ENCODE measurements at regions of chr4 and their contacts with region 1.

Region 1: DNA sequence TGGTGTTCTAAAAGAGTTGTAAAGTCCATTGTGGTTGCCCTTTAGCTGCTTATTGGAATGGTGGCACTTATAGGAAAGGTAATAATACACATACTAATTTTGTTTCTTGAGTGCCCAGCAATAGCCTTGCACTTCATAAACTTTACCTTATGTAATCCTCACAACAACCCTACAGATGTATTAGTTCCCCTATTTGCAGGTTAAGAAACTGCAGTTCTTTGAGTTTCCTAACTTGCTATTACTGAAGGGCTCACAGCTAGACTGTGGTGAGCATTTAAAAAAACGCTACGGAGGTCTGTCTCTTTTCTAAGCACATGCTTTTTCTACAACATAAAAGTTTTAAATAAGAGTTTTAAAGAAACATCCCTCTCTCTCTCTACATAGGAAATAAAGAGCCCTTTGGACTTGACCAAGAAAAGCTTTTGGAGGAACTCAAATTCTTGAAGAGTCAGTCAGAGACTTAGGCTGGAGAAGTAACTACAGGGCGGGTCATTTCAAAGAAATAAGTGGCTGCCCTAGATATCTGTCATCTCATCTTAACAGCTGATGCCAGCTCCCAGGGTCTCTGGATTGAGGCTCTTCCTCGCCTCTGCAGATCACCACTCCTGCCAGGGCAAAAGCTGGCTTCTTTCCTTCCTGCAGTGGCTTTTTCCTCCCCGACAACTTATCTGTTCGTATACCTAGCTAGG is 42.0 kb upstream of the FBXW7 start:
- DNase-seq: no peak
- H3K4me3 ChIP-seq: no peak overlapping the region
- H3K27ac ChIP-seq: no peak overlapping the region
- H3K4me1 ChIP-seq: no peaks in the 10 kb centered on the region
- H3K27me3 ChIP-seq: no peaks in the 10 kb centered on the region
- CTCF ChIP-seq: no peak
- EP300 ChIP-seq: no peak
- POLR2A ChIP-seq: no peak
- RAD21 ChIP-seq: no peak

Region 2: DNA sequence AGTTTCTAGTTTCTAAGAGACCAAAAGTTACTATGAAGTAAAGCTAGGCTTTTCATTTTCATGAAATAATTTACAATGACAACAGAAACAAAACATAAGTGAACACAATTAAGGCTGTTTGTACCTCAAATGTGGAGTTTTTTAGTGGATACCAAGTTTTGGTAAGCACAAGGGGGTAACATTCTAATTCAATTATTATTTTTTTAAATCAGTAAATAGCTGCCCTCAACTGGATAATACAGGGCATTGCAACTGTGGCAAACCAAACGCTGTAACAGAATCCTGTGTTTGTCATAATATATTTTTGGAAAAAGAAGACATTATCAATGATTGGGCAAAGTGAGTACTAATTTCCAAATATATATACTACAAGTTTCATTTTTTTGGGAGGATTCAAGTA is 192.3 kb before region 1 on chr4:
- CTCF ChIA-PET with region 1: no interaction called
- POLR2A ChIA-PET with region 1: no interaction called
- DNase-seq: no peak
- H3K4me3 ChIP-seq: no peak overlapping the region
- H3K27ac ChIP-seq: no peak overlapping the region
- H3K4me1 ChIP-seq: no peaks in the 10 kb centered on the region; a peak in 1 of 7 replicates
- H3K27me3 ChIP-seq: no peaks in the 10 kb centered on the region
- CTCF ChIP-seq: peak in 2 of 3 experiments; percentile 30 to 32; a peak in 2 of 4 replicates
- EP300 ChIP-seq: no peak
- POLR2A ChIP-seq: no peak
- RAD21 ChIP-seq: peak; percentile 49 to 61

Region 3: GRCh38 chr4:152591396-152591795 is 13.5 kb after region 1 on chr4:
- CTCF ChIA-PET with region 1: interaction called, 23 read pairs
- POLR2A ChIA-PET with region 1: no interaction called
- DNase-seq: peak; percentile 33 to 86
- H3K4me3 ChIP-seq: peak overlapping the region in 3 of 4 experiments; percentile 8 to 43 (median 16); a peak in 5 of 8 replicates
- H3K27ac ChIP-seq: no peak overlapping the region
- H3K4me1 ChIP-seq: peaks cover 0 to 2% (median 0%) of the 10 kb centered on the region in 4 experiments; a peak in 2 of 7 replicates
- H3K27me3 ChIP-seq: no peaks in the 10 kb centered on the region; a peak in 1 of 7 replicates
- CTCF ChIP-seq: no peak
- EP300 ChIP-seq: no peak
- POLR2A ChIP-seq: no peak
- RAD21 ChIP-seq: no peak

Region 4: DNA sequence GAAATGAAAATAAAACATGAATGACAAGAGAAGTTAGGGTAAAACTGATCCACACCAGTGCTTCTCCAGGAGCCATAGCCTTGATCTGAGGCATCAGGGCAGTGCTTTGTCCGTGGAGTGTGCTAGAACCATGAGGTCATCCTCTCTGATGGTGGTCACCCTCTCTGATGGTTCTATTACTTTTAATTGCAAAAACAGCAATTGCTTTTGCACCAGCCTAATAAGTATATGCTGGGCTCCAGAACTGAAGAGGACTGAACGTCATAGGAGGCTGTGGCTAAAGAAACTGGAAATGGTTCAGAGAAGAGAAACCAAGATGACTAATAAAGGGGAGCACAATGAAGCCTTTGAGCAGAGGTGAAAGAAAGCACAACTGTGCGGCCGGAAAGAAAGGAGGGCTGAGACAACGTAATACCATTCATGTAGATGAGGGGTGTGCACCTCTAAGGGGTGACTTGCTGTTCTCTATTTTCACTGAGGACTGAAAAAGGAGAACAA is 119.0 kb after region 1 on chr4:
- CTCF ChIA-PET with region 1: no interaction called
- POLR2A ChIA-PET with region 1: no interaction called
- DNase-seq: no peak
- H3K4me3 ChIP-seq: no peak overlapping the region
- H3K27ac ChIP-seq: no peak overlapping the region
- H3K4me1 ChIP-seq: peaks cover 7 to 11% (median 10%) of the 10 kb centered on the region in 4 experiments; a peak in 6 of 7 replicates
- H3K27me3 ChIP-seq: no peaks in the 10 kb centered on the region
- CTCF ChIP-seq: no peak
- EP300 ChIP-seq: no peak
- POLR2A ChIP-seq: no peak
- RAD21 ChIP-seq: no peak